PC-9 (cell line): ENCODE measurements at regions of chr12 and their contacts with region 1.

Region 1: GRCh38 chr12:32671930-32672780 is 6.9 kb upstream of the DNM1L start:
- DNase-seq: peak in 1 of 2 experiments; percentile 21
- H3K4me3 ChIP-seq: no peak overlapping the region
- H3K27ac ChIP-seq: no peak overlapping the region
- H3K4me1 ChIP-seq: no peaks in the 10 kb centered on the region
- H3K27me3 ChIP-seq: no peaks in the 10 kb centered on the region
- CTCF ChIP-seq: peak; percentile 68

Region 2: GRCh38 chr12:32198555-32198954 is 473.6 kb before region 1 on chr12:
- CTCF ChIA-PET with region 1: no interaction called
- POLR2A ChIA-PET with region 1: interaction called, 16 read pairs
- intact Hi-C with region 1: no loop called
- DNase-seq: no peak
- H3K4me3 ChIP-seq: no peak overlapping the region
- H3K27ac ChIP-seq: no peak overlapping the region
- H3K4me1 ChIP-seq: no peaks in the 10 kb centered on the region
- H3K27me3 ChIP-seq: no peaks in the 10 kb centered on the region
- CTCF ChIP-seq: no peak